ENCODE measurements at regions of chr2 and their contacts with region 1.

Region 1: GRCh38 chr2:113818382-113818951 is 62.0 kb upstream of the SLC35F5 start:
- DNase-seq: peak; percentile 88 to 96
- H3K4me3 ChIP-seq: peak overlapping the region; percentile 9; the same call in 1 of the 2 replicates
- H3K4me3 Mint-ChIP-seq: peak overlapping the region; percentile 52
- H3K27ac Mint-ChIP-seq: peak overlapping the region; percentile 85
- H3K4me1 ChIP-seq: peaks cover 26% of the 10 kb centered on the region
- H3K4me1 Mint-ChIP-seq: peaks cover 22% of the 10 kb centered on the region
- H3K27me3 ChIP-seq: no peaks in the 10 kb centered on the region
- H3K27me3 Mint-ChIP-seq: no peaks in the 10 kb centered on the region
- CTCF ChIP-seq: no peak

Region 2: DNA sequence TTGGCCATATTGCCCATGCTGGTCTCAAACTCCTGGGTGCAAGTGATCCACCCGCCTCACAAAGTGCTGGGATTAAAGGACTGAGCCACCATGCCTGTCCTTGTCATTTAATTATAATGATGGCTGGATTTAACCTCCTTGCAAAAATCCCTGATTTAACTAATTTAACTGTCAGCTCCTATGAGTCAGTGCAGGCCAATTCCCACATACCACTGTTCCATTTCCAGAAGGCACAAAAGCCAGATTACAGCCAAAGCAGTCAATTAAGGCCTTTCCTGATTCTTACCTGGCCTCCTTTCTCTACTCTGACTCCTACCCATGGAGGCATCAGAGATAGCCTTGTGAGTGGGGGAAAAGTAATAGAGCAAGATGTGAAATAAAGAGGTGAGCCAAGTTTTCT is 49.7 kb before region 1 on chr2:
- CTCF ChIA-PET with region 1: no interaction called
- POLR2A ChIA-PET with region 1: no interaction called
- intact Hi-C with region 1: loop called (anchors 1 kb)
- DNase-seq: no peak
- H3K4me3 ChIP-seq: no peak overlapping the region
- H3K4me3 Mint-ChIP-seq: no peak overlapping the region
- H3K27ac Mint-ChIP-seq: no peak overlapping the region
- H3K4me1 ChIP-seq: no peaks in the 10 kb centered on the region
- H3K4me1 Mint-ChIP-seq: peaks cover 6% of the 10 kb centered on the region
- H3K27me3 ChIP-seq: no peaks in the 10 kb centered on the region
- H3K27me3 Mint-ChIP-seq: no peaks in the 10 kb centered on the region
- CTCF ChIP-seq: no peak

Region 3: DNA sequence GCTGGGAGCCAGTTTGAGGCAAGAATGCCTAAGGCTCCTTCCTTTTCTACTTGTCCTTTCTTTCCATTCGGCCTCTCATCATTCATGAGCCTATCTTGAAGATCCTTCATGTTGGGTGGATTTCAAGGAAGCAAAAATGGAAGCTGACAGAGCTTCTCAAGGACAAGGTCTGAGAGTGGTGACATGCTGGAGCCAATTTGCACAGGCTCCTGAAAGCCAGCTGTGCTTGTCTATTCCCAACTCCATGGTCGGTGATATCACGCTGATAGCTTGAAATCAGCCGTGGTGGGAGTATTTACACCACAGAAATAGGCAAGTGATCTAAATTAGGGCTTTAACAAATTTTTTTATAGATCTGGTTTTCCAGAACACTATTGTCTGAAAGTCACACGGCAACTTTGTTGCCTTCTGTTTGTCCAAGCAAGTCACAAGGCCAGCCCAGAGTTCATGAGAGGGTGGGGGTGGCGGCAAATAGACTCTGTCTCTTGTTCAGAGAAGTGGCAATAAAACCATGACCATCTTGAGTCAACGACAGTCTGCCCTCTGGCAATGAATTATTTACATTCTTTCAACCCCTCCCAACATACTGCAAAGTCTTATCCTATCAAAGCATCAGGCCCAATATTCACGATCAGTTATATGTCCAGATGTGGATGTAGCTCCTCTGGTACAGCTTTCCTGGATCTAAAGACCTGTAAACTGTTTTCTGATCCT is 12.1 kb before region 1 on chr2:
- CTCF ChIA-PET with region 1: no interaction called
- POLR2A ChIA-PET with region 1: interaction called, 5 read pairs
- intact Hi-C with region 1: loop called (anchors 1 kb)
- DNase-seq: peak; percentile 79 to 90
- H3K4me3 ChIP-seq: no peak overlapping the region
- H3K4me3 Mint-ChIP-seq: no peak overlapping the region
- H3K27ac Mint-ChIP-seq: peak overlapping the region; percentile 81
- H3K4me1 ChIP-seq: peaks cover 52% of the 10 kb centered on the region
- H3K4me1 Mint-ChIP-seq: peaks cover 37% of the 10 kb centered on the region
- H3K27me3 ChIP-seq: no peaks in the 10 kb centered on the region
- H3K27me3 Mint-ChIP-seq: no peaks in the 10 kb centered on the region
- CTCF ChIP-seq: no peak

Region 4: DNA sequence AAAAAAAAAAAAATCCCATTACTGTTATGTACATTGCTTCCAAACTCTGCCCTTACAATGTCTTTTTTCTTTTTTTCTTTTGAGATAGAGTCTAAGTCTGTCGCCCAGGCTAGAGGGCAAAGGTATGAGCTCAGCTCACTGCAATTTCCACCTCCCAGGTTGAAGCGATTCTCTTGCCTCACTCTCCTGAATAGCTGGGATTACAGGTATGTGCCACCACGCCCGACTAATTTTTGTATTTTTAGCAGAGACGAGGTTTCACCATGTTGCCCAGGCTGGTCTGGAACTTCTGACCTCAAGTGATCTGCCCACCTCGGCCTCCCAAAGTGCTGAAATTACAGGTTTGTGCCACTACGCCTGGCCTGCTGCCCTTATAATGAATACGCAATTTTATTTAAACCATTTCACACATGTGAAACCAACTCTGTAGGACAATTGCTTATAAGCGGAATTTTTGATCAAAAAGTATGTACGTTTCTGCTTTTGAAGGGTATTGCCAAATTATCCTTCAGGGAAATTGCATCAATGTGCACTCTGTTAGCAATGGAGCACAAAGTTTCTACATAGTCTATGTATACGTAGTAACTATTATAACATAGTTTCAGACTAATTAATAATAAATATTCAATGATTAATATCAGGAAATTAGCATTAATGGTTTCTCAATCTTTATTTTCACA is 15.7 kb after region 1 on chr2:
- CTCF ChIA-PET with region 1: no interaction called
- POLR2A ChIA-PET with region 1: no interaction called
- intact Hi-C with region 1: no loop called
- DNase-seq: peak; percentile 43 to 57
- H3K4me3 ChIP-seq: no peak overlapping the region
- H3K4me3 Mint-ChIP-seq: no peak overlapping the region
- H3K27ac Mint-ChIP-seq: no peak overlapping the region
- H3K4me1 ChIP-seq: peaks cover 29% of the 10 kb centered on the region
- H3K4me1 Mint-ChIP-seq: peaks cover 4% of the 10 kb centered on the region
- H3K27me3 ChIP-seq: no peaks in the 10 kb centered on the region
- H3K27me3 Mint-ChIP-seq: no peaks in the 10 kb centered on the region
- CTCF ChIP-seq: no peak

Region 5: DNA sequence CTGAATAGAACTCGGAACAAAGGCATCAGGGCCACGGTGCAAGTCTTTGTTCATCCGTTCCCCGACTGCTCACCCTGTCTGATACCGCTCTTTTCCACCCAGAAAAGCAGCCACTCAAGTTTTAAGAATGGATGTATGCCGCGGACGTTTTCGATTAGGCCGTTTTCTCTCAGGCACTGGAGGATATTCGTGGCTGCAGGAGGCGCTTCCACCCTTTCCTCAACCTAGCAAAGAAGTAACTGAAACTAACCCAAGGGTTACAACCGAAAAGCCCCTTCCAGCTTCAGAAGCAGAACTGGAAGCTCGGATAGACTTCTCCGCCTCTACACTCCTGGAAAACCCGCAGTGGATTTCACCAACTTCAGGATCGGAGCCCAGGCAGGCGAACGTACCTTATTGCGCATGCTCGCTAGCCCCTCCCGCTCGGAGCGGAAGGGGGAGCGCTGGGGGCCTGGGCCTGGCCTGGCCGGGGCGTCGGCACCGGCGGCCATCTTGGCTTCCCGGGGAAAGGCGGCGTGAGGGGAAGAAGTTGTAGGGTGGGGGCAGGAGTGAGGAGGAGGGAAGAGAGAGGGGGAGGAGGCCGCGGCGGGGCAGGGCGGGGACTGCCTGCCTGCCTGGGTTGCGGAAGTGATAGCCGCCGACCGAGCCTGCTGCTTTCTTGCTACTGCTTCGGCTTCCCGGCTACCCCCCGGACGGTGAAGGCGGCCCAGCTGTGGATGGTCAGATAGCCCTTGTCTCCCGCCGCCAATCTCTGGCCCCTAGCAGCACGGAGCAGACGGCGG is 71.2 kb after region 1 on chr2 and contains the start of gene ACTR3:
- CTCF ChIA-PET with region 1: interaction called, 4 read pairs
- POLR2A ChIA-PET with region 1: no interaction called
- intact Hi-C with region 1: loop called (anchors 2 kb)
- DNase-seq: peak; percentile 98 to 99
- H3K4me3 ChIP-seq: peak within 1 kb of the TSS; percentile 98
- H3K4me3 Mint-ChIP-seq: peak within 1 kb of the TSS; percentile 80
- H3K27ac Mint-ChIP-seq: peak within 1 kb of the TSS; percentile 53
- H3K4me1 ChIP-seq: peaks cover 49% of the 10 kb centered on the region
- H3K4me1 Mint-ChIP-seq: peaks cover 54% of the 10 kb centered on the region
- H3K27me3 ChIP-seq: no peaks in the 10 kb centered on the region
- H3K27me3 Mint-ChIP-seq: no peaks in the 10 kb centered on the region
- CTCF ChIP-seq: no peak
- total RNA-seq, gene ACTR3: 340 and 341 TPM in 2 replicates

Region 6: GRCh38 chr2:113901943-113902342 is 83.5 kb after region 1 on chr2:
- CTCF ChIA-PET with region 1: no interaction called
- POLR2A ChIA-PET with region 1: no interaction called
- intact Hi-C with region 1: no loop called
- DNase-seq: no peak
- H3K4me3 ChIP-seq: no peak overlapping the region
- H3K4me3 Mint-ChIP-seq: no peak overlapping the region
- H3K27ac Mint-ChIP-seq: no peak overlapping the region
- H3K4me1 ChIP-seq: peaks cover 28% of the 10 kb centered on the region
- H3K4me1 Mint-ChIP-seq: peaks cover 41% of the 10 kb centered on the region
- H3K27me3 ChIP-seq: no peaks in the 10 kb centered on the region
- H3K27me3 Mint-ChIP-seq: no peaks in the 10 kb centered on the region
- CTCF ChIP-seq: no peak